ENCODE measurements at regions of chr11 and their contacts with region 1.

Region 1: DNA sequence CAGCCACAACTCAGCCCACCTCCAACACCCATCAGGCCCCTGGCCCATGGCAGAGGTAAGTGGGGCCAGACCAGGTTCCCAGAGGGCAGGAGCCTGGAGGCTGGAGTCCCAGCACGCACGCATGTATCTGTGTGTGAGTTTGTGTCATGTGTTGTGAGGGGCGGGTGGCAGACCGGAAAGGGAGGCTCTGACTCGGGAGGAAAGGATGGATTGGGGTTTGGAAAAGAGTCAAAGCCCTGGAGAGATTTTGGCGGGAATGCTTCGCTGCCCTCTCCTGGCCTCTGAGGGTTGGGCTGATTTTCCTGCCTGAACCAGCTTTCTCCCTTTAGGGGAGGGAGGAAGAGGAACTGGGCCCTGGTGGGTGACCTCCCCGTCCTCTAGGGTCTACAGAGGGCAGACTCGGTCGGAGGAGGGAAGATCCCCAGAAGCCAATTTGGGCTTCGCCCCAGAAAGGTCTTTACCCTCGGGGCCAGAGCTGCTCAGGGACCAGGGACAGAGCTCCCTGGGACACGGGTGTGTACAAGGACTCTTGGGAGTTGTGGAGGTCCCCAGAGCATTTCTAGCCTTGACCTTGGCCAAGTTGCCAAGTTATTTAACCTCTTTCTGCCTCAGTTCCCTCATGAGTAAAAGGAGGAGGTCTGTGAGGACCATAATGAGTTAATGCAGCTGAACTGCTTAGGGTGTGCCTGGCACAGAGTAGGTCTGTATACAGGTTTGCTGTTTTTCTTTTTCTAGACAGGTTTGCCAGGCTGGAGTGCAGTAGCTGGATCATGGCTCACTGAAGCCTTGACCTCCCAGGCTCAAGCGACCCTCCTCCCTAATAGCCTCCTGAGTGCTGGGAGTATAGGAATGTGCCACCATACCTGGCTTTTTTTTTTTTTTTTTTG is 6.9 kb downstream of the C11orf68 start:
- DNase-seq: no peak
- ATAC-seq: peak; percentile 24
- H3K4me3 ChIP-seq: no peak overlapping the region
- H3K27ac ChIP-seq: peak overlapping the region; percentile 99
- H3K4me1 ChIP-seq: peaks cover 90% of the 10 kb centered on the region
- H3K27me3 ChIP-seq: no peaks in the 10 kb centered on the region
- CTCF ChIP-seq: no peak

Region 2: GRCh38 chr11:65900125-65900898 is 11.6 kb before region 1 on chr11 and contains the start of gene FOSL1:
- CTCF ChIA-PET with region 1: interaction called, 10 read pairs
- POLR2A ChIA-PET with region 1: interaction called, 37 read pairs
- in situ Hi-C with region 1: no loop called
- intact Hi-C with region 1: no loop called
- DNase-seq: no peak
- ATAC-seq: peak; percentile 69
- H3K4me3 ChIP-seq: peak within 1 kb of the TSS; percentile 82 to 89
- H3K27ac ChIP-seq: peak within 1 kb of the TSS; percentile 99
- H3K4me1 ChIP-seq: peaks cover 58% of the 10 kb centered on the region
- H3K27me3 ChIP-seq: no peaks in the 10 kb centered on the region
- CTCF ChIP-seq: no peak
- total RNA-seq, gene FOSL1: 186 TPM

Region 3: DNA sequence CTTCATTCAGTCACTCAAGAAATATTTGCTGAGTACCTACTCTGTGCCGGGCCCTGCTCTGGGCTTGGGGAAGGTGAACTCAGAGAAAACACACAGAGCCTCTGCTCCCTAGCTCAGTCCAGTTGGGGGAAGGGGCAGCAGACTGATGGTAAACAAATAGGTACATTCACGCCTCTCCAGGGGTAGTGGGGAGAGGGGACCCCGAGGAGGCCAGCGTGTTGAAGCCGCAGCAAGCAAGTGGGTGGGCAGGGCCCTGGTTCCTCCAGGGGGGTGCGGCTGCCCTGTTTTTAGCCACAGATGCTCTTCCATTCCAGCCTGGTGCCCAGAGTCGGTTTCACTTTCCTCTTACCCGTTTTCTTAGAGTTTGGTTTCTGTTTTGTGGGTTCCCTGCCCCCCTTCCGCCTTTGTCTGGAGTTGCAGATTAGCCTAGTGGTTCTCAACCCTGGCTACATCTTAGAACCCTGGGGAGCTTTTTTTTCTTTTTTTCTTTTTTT is 16.0 kb after region 1 on chr11:
- CTCF ChIA-PET with region 1: no interaction called
- POLR2A ChIA-PET with region 1: interaction called, 12 read pairs
- in situ Hi-C with region 1: no loop called
- intact Hi-C with region 1: no loop called
- DNase-seq: no peak
- ATAC-seq: peak; percentile 31
- H3K4me3 ChIP-seq: no peak overlapping the region
- H3K27ac ChIP-seq: no peak overlapping the region
- H3K4me1 ChIP-seq: peaks cover 14% of the 10 kb centered on the region
- H3K27me3 ChIP-seq: no peaks in the 10 kb centered on the region
- CTCF ChIP-seq: no peak

Region 4: GRCh38 chr11:66001942-66002647 is 90.2 kb after region 1 on chr11 and contains the starts of genes BANF1 and EIF1AD:
- CTCF ChIA-PET with region 1: interaction called, 5 read pairs
- POLR2A ChIA-PET with region 1: interaction called, 10 read pairs
- in situ Hi-C with region 1: no loop called
- intact Hi-C with region 1: no loop called
- DNase-seq: peak; percentile 96
- ATAC-seq: peak; percentile 90
- H3K4me3 ChIP-seq: peak within 1 kb of the TSS; percentile 63 to 100
- H3K27ac ChIP-seq: peak within 1 kb of the TSS; percentile 100
- H3K4me1 ChIP-seq: peaks cover 43% of the 10 kb centered on the region
- H3K27me3 ChIP-seq: no peaks in the 10 kb centered on the region
- CTCF ChIP-seq: no peak
- total RNA-seq, gene BANF1: 494 TPM
- total RNA-seq, gene EIF1AD: 64.6 TPM